Adrenal gland (tissue), 19 donors: ENCODE measurements at regions of chr16 and their contacts with region 1.

Region 1: DNA sequence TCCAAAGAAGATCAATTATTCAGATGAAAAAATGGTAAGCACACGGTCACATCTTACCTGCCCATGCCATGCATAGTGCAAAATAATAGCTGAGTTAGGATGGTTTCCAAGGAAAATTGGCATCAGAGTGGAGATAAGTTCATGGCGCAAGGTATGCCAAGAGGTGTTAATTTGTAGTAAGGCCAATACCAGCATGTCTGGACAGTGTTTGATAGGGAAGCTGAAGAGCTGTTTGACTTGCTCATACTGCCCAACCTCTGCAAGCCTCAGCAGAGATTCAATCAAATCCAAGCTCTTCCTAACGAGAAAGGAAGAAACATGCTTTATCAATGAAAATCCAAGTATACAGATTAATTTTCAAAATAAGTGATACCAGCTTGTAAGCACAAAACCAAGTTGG is 51.0 kb downstream of the CNOT1 start:
- DNase-seq: no peak
- H3K4me3 ChIP-seq: no peak overlapping the region
- H3K27ac ChIP-seq: no peak overlapping the region
- H3K4me1 ChIP-seq: no peaks in the 10 kb centered on the region
- H3K27me3 ChIP-seq: no peaks in the 10 kb centered on the region
- CTCF ChIP-seq: no peak
- POLR2A ChIP-seq: no peak

Region 2: GRCh38 chr16:58515125-58515870 is 63.3 kb before region 1 on chr16 and contains the start of gene SETD6:
- intact Hi-C with region 1: loop called in 1 of 2 experiments (anchors 10 kb)
- DNase-seq: peak; percentile 87 to 96 (median 94)
- H3K4me3 ChIP-seq: peak within 1 kb of the TSS; percentile 59 to 80 (median 64)
- H3K27ac ChIP-seq: peak within 1 kb of the TSS; percentile 31 to 89 (median 82)
- H3K4me1 ChIP-seq: peaks cover 11 to 18% of the 10 kb centered on the region in 2 donors
- H3K27me3 ChIP-seq: no peaks in the 10 kb centered on the region
- CTCF ChIP-seq: peak in 5 of 6 experiments; percentile 29 to 57 (median 38)
- POLR2A ChIP-seq: peak; percentile 6 to 64
- total RNA-seq, gene SETD6: 14.4 to 53.8 (median 26.8) TPM